ENCODE measurements at regions of chr20 and their contacts with region 1.

Region 1: GRCh38 chr20:33908336-33908735 is 85.4 kb upstream of the RALY start:
- DNase-seq: no peak

Region 2: DNA sequence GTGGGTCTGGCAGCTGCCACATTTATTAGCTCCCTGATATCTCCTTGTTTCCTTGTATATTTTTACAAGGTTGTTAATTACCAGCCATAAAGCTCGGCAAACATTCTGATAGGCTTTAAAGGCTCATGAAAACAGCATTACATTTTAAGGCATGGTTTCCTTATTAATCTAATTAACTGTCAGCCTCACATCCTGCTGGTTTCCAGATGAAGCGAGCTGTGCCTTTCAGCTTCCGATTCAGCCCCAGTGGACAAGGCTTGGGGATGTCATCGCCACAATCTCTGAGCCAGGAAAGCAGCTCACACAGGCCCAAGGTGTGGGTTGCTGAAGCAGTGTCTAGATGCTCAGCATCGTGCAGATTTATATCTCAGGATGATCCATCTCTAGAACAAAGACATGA is 19.4 kb after region 1 on chr20:
- CTCF ChIA-PET with region 1: interaction called, 10 read pairs
- POLR2A ChIA-PET with region 1: no interaction called
- DNase-seq: no peak

Measured in HEK293T (cell line).